ENCODE measurements at regions of chr1 and their contacts with region 1.

Region 1: DNA sequence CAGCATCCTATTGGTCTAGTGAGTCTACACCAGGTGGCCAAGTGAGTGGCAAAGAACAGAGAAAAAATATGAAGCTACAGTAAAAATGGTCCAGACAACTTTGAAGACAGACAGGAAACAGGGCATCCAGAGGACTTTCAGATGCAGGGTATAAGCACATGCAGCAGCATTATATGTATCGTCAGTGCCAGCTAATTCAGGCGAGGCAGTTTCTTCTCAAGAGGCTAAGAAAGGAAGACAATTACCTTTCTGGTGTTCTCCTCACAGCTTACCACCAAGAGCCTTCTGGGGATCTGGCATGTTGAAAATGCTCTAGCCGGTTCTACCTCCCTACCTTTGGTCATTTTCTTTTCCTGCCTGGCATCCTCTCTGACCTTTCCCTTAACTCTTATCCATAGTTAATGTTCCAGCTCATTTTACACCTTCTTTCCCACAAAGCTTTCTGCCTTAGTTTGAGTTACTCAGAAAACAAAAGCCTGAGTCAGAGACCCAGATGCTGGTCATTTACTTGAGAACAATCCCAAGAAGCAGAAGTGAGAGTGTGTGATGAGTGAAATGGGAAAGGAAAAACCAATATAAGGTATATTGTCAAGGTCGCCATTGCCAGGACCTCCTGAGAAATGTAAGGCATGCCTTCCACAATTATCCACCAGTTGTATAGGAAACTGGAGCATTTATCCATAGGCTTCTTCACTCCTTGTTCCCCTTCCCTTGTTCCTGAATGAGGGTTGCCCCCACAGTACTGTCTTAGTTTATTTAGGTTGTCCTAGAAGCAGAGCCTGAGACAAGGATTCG is 444.1 kb downstream of the PLPP3 start:
- DNase-seq: no peak
- ATAC-seq: peak; percentile 67
- H3K4me3 ChIP-seq: no peak overlapping the region
- H3K27ac ChIP-seq: peak overlapping the region; percentile 56
- H3K4me1 ChIP-seq: peaks cover 25% of the 10 kb centered on the region
- H3K27me3 ChIP-seq: no peaks in the 10 kb centered on the region
- CTCF ChIP-seq: no peak
- EP300 ChIP-seq: peak in 1 of 2 experiments; percentile 87; a peak in 1 of 4 replicates
- POLR2A ChIP-seq: no peak
- RAD21 ChIP-seq: 0 out of 2 replicates have a peak, but pooled peaks have one; percentile 1

Region 2: GRCh38 chr1:56045477-56045876 is 89.8 kb before region 1 on chr1:
- CTCF ChIA-PET with region 1: interaction called, 3 read pairs
- POLR2A ChIA-PET with region 1: no interaction called
- RAD21 ChIA-PET with region 1: interaction called, 4 read pairs
- SMC1A ChIA-PET with region 1: interaction called, 15 read pairs
- in situ Hi-C with region 1: no loop called
- intact Hi-C with region 1: loop called (anchors 2 kb)
- DNase-seq: no peak
- ATAC-seq: peak; percentile 93
- H3K4me3 ChIP-seq: no peak overlapping the region
- H3K27ac ChIP-seq: no peak overlapping the region
- H3K4me1 ChIP-seq: peaks cover 8% of the 10 kb centered on the region
- H3K27me3 ChIP-seq: no peaks in the 10 kb centered on the region
- CTCF ChIP-seq: no peak
- EP300 ChIP-seq: no peak
- POLR2A ChIP-seq: no peak
- RAD21 ChIP-seq: no peak

Region 3: GRCh38 chr1:56106531-56107275 is 28.6 kb before region 1 on chr1:
- CTCF ChIA-PET with region 1: interaction called, 3 read pairs
- POLR2A ChIA-PET with region 1: interaction called, 13 read pairs
- RAD21 ChIA-PET with region 1: interaction called, 51 read pairs
- SMC1A ChIA-PET with region 1: interaction called, 61 read pairs
- in situ Hi-C with region 1: no loop called
- intact Hi-C with region 1: no loop called
- DNase-seq: peak; percentile 31
- ATAC-seq: peak; percentile 84
- H3K4me3 ChIP-seq: no peak overlapping the region
- H3K27ac ChIP-seq: no peak overlapping the region; the same call in 1 of the 2 replicates
- H3K4me1 ChIP-seq: peaks cover 6% of the 10 kb centered on the region; the same call in 1 of the 2 replicates
- H3K27me3 ChIP-seq: no peaks in the 10 kb centered on the region
- CTCF ChIP-seq: no peak
- EP300 ChIP-seq: no peak
- POLR2A ChIP-seq: no peak
- RAD21 ChIP-seq: peak; percentile 11; the same call in 1 of the 2 replicates

Region 4: DNA sequence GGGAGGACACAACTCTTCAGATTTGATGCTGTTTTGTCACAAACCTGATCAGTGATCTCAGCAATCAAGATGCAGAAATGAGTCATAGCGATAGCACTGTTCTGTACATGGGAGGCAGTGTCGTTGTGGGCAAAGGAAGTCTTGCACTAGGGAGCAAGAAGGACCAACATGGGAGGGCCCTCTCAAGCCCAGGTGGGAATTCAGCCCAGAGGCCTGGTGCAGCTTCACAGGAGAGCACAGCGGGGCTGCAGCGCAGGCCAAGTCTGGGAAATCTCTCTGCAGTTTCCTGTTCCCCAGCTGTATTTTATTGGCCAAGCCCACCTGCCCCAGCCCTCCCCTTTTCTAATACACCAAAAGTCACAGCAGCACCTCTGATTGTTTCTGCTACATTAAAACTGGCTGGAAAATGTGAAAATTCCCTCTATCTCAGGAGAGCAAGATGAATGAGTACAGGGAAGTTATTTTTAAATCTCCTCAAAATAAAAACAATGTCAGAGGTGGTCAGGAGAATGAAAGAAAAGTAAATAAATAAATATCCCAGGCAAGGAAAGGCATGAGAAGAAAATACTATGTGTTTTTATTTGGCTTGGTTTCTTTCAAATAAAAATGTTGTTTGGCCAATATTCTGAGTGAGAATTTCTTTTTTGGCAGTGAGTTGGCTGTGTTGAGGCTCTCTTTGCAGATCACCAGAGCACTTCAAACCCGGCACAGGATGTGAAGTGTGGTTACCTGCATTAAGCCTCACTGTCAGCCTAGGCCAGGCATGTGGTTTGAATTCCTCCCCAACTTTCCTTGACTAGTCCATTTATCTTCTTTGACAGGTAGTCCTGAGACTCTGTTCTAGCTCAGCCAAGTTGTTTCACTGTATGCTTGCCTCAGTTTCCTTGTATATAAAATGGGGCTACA is 22.0 kb after region 1 on chr1:
- CTCF ChIA-PET with region 1: interaction called, 3 read pairs
- POLR2A ChIA-PET with region 1: no interaction called
- RAD21 ChIA-PET with region 1: interaction called, 6 read pairs
- SMC1A ChIA-PET with region 1: interaction called, 22 read pairs
- in situ Hi-C with region 1: no loop called
- intact Hi-C with region 1: no loop called
- DNase-seq: no peak
- ATAC-seq: peak; percentile 86
- H3K4me3 ChIP-seq: no peak overlapping the region
- H3K27ac ChIP-seq: no peak overlapping the region
- H3K4me1 ChIP-seq: no peaks in the 10 kb centered on the region
- H3K27me3 ChIP-seq: no peaks in the 10 kb centered on the region
- CTCF ChIP-seq: no peak
- EP300 ChIP-seq: no peak
- POLR2A ChIP-seq: no peak
- RAD21 ChIP-seq: no peak

Region 5: DNA sequence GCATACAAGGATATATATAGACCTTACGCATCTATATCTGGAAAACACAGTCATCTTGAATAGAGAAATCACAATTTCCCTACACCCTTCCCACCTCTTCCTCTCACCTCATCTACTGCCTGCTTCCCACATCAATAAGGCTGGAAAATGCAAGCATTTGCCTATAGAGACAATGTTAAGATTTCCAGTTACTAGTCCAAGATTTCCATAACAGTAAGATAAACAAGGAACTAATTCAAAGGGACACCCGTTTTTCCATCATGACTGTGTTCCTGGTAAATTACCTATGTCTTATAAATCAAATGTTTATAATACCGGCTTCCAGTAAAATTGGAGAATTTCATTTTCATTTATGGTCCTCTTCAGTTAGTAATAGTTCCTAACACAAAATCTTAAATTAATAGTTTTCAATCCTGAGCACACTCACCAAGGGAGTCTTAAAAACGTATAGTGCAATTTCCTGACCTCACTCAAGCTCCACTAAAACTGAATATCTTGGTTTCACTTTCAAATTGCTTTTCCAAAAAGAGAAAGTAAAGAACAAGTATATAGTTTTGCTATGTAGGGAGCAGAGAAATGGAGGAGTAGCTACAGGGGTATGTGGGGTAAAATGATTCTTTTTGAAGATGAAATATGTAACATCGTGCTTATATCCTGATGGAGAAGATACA is 45.4 kb after region 1 on chr1:
- CTCF ChIA-PET with region 1: interaction called, 5 read pairs
- POLR2A ChIA-PET with region 1: interaction called, 3 read pairs
- RAD21 ChIA-PET with region 1: interaction called, 5 read pairs
- SMC1A ChIA-PET with region 1: interaction called, 27 read pairs
- in situ Hi-C with region 1: no loop called
- intact Hi-C with region 1: no loop called
- DNase-seq: no peak
- ATAC-seq: peak; percentile 80
- H3K4me3 ChIP-seq: no peak overlapping the region
- H3K27ac ChIP-seq: no peak overlapping the region
- H3K4me1 ChIP-seq: no peaks in the 10 kb centered on the region; the same call in 1 of the 2 replicates
- H3K27me3 ChIP-seq: no peaks in the 10 kb centered on the region
- CTCF ChIP-seq: no peak
- EP300 ChIP-seq: no peak
- POLR2A ChIP-seq: no peak
- RAD21 ChIP-seq: no peak

Region 6: GRCh38 chr1:56278061-56278460 is 142.8 kb after region 1 on chr1:
- CTCF ChIA-PET with region 1: interaction called, 3 read pairs
- POLR2A ChIA-PET with region 1: no interaction called
- RAD21 ChIA-PET with region 1: interaction called, 10 read pairs
- SMC1A ChIA-PET with region 1: interaction called, 3 read pairs
- in situ Hi-C with region 1: no loop called
- intact Hi-C with region 1: no loop called
- DNase-seq: no peak
- ATAC-seq: peak; percentile 62
- H3K4me3 ChIP-seq: no peak overlapping the region
- H3K27ac ChIP-seq: no peak overlapping the region
- H3K4me1 ChIP-seq: no peaks in the 10 kb centered on the region
- H3K27me3 ChIP-seq: no peaks in the 10 kb centered on the region
- CTCF ChIP-seq: no peak
- EP300 ChIP-seq: peak in 1 of 2 experiments; percentile 62; a peak in 1 of 4 replicates
- POLR2A ChIP-seq: no peak
- RAD21 ChIP-seq: no peak